ENCODE measurements at regions of chr17 and their contacts with region 1.

Region 1: GRCh38 chr17:67824735-67825626 is at the start of gene BPTF:
- DNase-seq: peak; percentile 94
- ATAC-seq: peak; percentile 77
- H3K4me3 Mint-ChIP-seq: peak within 1 kb of the TSS; percentile 98
- H3K27ac Mint-ChIP-seq: peak within 1 kb of the TSS; percentile 96
- H3K4me1 Mint-ChIP-seq: peaks cover 67% of the 10 kb centered on the region
- H3K27me3 Mint-ChIP-seq: no peaks in the 10 kb centered on the region
- CTCF ChIP-seq: no peak
- total RNA-seq, gene BPTF: 166 and 174 TPM in 2 replicates

Region 2: DNA sequence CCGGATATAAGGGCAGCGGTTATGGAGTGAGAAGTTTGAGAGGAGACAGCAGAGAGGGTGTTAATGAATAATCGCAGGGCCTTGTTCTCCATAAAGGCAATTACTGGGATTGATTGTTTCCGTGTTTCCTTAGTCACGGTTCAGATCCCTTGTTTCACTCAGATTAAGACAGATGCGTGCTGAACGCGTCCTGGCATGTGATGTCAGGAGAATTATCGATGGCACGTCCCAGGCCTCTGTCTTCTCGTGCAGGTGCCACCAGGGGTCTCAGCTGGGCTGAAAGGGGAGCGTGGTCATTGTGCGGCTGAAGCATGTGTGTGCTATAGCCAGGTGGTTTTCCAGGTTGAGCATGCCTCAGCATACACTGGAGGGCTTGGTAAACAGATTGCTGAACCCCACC is 249.7 kb before region 1 on chr17:
- CTCF ChIA-PET with region 1: no interaction called
- POLR2A ChIA-PET with region 1: interaction called, 16 read pairs
- intact Hi-C with region 1: no loop called
- DNase-seq: no peak
- ATAC-seq: peak; percentile 23
- H3K4me3 Mint-ChIP-seq: peak overlapping the region; percentile 64
- H3K27ac Mint-ChIP-seq: peak overlapping the region; percentile 80
- H3K4me1 Mint-ChIP-seq: peaks cover 73% of the 10 kb centered on the region
- H3K27me3 Mint-ChIP-seq: no peaks in the 10 kb centered on the region
- CTCF ChIP-seq: no peak

Region 3: GRCh38 chr17:67800495-67800928 is 24.5 kb before region 1 on chr17:
- CTCF ChIA-PET with region 1: interaction called, 33 read pairs
- POLR2A ChIA-PET with region 1: interaction called, 70 read pairs
- intact Hi-C with region 1: loop called (anchors 1 kb)
- DNase-seq: peak; percentile 68
- ATAC-seq: peak; percentile 94
- H3K4me3 Mint-ChIP-seq: peak overlapping the region; percentile 11
- H3K27ac Mint-ChIP-seq: peak overlapping the region; percentile 19
- H3K4me1 Mint-ChIP-seq: peaks cover 17% of the 10 kb centered on the region
- H3K27me3 Mint-ChIP-seq: no peaks in the 10 kb centered on the region
- CTCF ChIP-seq: no peak

Region 4: DNA sequence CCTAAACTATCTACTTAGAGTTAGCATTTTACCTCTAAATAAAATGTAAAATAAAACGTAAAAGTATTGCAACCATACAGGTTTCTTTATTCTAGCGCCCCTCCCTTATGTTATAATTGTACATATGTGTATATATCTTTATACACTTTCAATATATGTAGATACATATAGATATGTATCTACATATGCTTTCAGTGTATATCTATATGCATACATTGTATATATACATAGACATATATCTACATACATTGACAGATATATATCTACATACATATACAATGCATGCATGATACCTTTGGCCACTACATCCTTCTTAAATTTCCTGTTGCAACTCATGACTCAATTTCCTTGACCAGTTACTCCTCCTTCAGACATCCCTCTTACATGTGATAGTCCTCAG is 17.0 kb after region 1 on chr17:
- CTCF ChIA-PET with region 1: no interaction called
- POLR2A ChIA-PET with region 1: no interaction called
- intact Hi-C with region 1: loop called (anchors 1 kb)
- DNase-seq: no peak
- ATAC-seq: no peak
- H3K4me3 Mint-ChIP-seq: no peak overlapping the region
- H3K27ac Mint-ChIP-seq: no peak overlapping the region
- H3K4me1 Mint-ChIP-seq: peaks cover 45% of the 10 kb centered on the region
- H3K27me3 Mint-ChIP-seq: no peaks in the 10 kb centered on the region
- CTCF ChIP-seq: no peak

Region 5: GRCh38 chr17:68089887-68090286 is 264.9 kb after region 1 on chr17:
- CTCF ChIA-PET with region 1: no interaction called
- POLR2A ChIA-PET with region 1: interaction called, 10 read pairs
- intact Hi-C with region 1: no loop called
- DNase-seq: no peak
- ATAC-seq: no peak
- H3K4me3 Mint-ChIP-seq: no peak overlapping the region
- H3K27ac Mint-ChIP-seq: no peak overlapping the region
- H3K4me1 Mint-ChIP-seq: peaks cover 39% of the 10 kb centered on the region
- H3K27me3 Mint-ChIP-seq: no peaks in the 10 kb centered on the region
- CTCF ChIP-seq: no peak

Measured in activated B cell treated with CpG ODN at 0.5 μM for 24 hours (primary cell).